Activated CD4-positive, alpha-beta T cell treated with anti-CD3 and anti-CD28 coated beads for 36 hours (primary cell): ENCODE measurements at regions of chr9 and their contacts with region 1.

Region 1: GRCh38 chr9:88460587-88461332 is 72.5 kb downstream of the SPIN1 start:
- DNase-seq: peak; percentile 57
- ATAC-seq: peak; percentile 98
- H3K4me3 Mint-ChIP-seq: no peak overlapping the region
- H3K27ac Mint-ChIP-seq: peak overlapping the region; percentile 48
- H3K4me1 Mint-ChIP-seq: peaks cover 12% of the 10 kb centered on the region
- H3K27me3 Mint-ChIP-seq: no peaks in the 10 kb centered on the region

Region 2: GRCh38 chr9:88443480-88444113 is 17.2 kb before region 1 on chr9:
- CTCF ChIA-PET with region 1: no interaction called
- POLR2A ChIA-PET with region 1: no interaction called
- intact Hi-C with region 1: no loop called
- DNase-seq: no peak
- ATAC-seq: no peak
- H3K4me3 Mint-ChIP-seq: no peak overlapping the region
- H3K27ac Mint-ChIP-seq: no peak overlapping the region
- H3K4me1 Mint-ChIP-seq: peaks cover 35% of the 10 kb centered on the region
- H3K27me3 Mint-ChIP-seq: no peaks in the 10 kb centered on the region

Region 3: GRCh38 chr9:88534456-88535261 is 73.9 kb after region 1 on chr9 and contains the start of gene NXNL2:
- CTCF ChIA-PET with region 1: no interaction called
- POLR2A ChIA-PET with region 1: no interaction called
- intact Hi-C with region 1: loop called in 1 of 2 experiments (anchors 2 kb)
- DNase-seq: peak; percentile 70
- ATAC-seq: peak; percentile 40
- H3K4me3 Mint-ChIP-seq: peak within 1 kb of the TSS; percentile 21
- H3K27ac Mint-ChIP-seq: no peak within 1 kb of the TSS
- H3K4me1 Mint-ChIP-seq: peaks cover 12% of the 10 kb centered on the region
- H3K27me3 Mint-ChIP-seq: peaks cover 28% of the 10 kb centered on the region
- total RNA-seq, gene NXNL2: not detected